Sigmoid colon (tissue), 7 donors: ENCODE measurements at regions of chr2 and their contacts with region 1.

Region 1: GRCh38 chr2:12931186-12931844 is 214.6 kb downstream of the TRIB2 start:
- DNase-seq: no peak
- H3K4me3 ChIP-seq: no peak overlapping the region
- H3K27ac ChIP-seq: peak overlapping the region in 1 of 4 donors; percentile 57
- H3K4me1 ChIP-seq: peaks cover 0 to 34% (median 27%) of the 10 kb centered on the region in 4 donors
- H3K27me3 ChIP-seq: no peaks in the 10 kb centered on the region
- CTCF ChIP-seq: peak; percentile 76 to 87 (median 82)
- EP300 ChIP-seq: no peak
- POLR2A ChIP-seq: no peak

Region 2: DNA sequence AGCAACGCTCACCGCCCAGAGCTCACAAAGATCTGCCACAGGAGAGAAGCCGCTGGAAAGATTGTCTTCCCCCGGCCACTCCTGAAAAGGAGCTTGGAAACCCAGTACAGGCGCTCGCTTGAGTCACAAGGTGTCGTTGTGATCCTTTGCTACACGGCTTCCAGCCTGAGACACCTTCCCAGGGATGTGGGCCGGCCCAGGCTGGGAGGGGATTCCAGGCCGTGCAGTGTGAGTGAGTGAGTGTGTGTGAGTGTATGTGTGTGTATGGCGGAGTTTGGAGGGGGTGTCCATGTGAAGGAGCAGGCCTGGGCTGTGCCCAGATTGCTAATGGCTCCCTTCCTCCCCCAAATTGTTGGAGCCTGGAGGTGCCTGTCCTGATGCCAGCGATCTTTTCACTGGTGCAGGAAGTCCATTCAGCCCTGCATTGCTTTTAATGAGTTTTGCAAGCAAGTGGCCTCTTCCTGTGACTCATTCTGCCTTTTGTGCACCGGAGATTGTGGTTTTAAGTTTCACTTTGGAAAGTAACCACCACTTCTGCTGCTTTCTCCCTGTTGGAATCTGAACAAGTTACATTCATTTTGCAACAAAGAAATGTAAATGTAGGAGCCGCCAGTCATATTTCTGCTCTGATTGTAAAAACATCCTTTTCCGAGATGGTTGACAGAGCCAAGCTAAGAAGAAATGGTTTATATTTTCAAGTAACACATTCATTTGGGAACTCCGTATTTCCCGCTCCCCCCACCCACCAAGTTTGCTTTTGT is 1101.2 kb before region 1 on chr2:
- intact Hi-C with region 1: loop called (anchors 1 kb)
- DNase-seq: peak; percentile 84
- H3K4me3 ChIP-seq: peak overlapping the region; percentile 3 to 37 (median 27)
- H3K27ac ChIP-seq: peak overlapping the region; percentile 75 to 84 (median 80)
- H3K4me1 ChIP-seq: peaks cover 0 to 24% (median 22%) of the 10 kb centered on the region in 4 donors
- H3K27me3 ChIP-seq: no peaks in the 10 kb centered on the region
- CTCF ChIP-seq: peak in 2 of 4 experiments; percentile 5 to 27
- EP300 ChIP-seq: no peak
- POLR2A ChIP-seq: no peak

Region 3: GRCh38 chr2:11863513-11864328 is 1067.6 kb before region 1 on chr2:
- intact Hi-C with region 1: loop called (anchors 2 kb)
- DNase-seq: peak; percentile 93
- H3K4me3 ChIP-seq: peak overlapping the region in 1 of 4 donors; percentile 15
- H3K27ac ChIP-seq: peak overlapping the region; percentile 7 to 55 (median 42)
- H3K4me1 ChIP-seq: peaks cover 0 to 15% (median 13%) of the 10 kb centered on the region in 4 donors
- H3K27me3 ChIP-seq: no peaks in the 10 kb centered on the region
- CTCF ChIP-seq: peak; percentile 92 to 97 (median 97)
- EP300 ChIP-seq: peak in 1 of 4 donors; percentile 8
- POLR2A ChIP-seq: no peak

Region 4: DNA sequence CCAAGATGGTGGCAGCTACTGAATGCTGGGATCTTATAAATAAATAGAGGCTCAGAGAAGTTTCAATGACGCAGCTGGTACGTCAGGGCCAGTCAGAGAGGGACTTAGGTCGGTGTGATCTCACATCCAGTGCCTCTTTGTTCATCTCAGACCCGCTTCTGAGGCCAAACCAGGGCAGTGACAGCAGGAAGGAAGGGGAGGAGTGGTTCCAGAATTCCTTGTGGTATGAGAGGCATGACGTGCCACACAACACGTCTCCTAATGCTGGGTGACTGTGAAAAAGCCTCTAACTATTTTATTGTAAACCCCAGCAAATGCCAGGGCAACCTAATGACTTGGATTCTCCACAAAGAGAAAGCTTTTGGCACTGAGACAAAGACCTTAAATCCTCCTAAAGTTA is 761.6 kb before region 1 on chr2:
- intact Hi-C with region 1: loop called (anchors 10 kb)
- DNase-seq: peak; percentile 74
- H3K4me3 ChIP-seq: no peak overlapping the region
- H3K27ac ChIP-seq: peak overlapping the region; percentile 51 to 73 (median 66)
- H3K4me1 ChIP-seq: peaks cover 0 to 29% (median 25%) of the 10 kb centered on the region in 4 donors
- H3K27me3 ChIP-seq: no peaks in the 10 kb centered on the region
- CTCF ChIP-seq: no peak
- EP300 ChIP-seq: peak in 2 of 4 donors; percentile 40 to 47
- POLR2A ChIP-seq: no peak

Region 5: DNA sequence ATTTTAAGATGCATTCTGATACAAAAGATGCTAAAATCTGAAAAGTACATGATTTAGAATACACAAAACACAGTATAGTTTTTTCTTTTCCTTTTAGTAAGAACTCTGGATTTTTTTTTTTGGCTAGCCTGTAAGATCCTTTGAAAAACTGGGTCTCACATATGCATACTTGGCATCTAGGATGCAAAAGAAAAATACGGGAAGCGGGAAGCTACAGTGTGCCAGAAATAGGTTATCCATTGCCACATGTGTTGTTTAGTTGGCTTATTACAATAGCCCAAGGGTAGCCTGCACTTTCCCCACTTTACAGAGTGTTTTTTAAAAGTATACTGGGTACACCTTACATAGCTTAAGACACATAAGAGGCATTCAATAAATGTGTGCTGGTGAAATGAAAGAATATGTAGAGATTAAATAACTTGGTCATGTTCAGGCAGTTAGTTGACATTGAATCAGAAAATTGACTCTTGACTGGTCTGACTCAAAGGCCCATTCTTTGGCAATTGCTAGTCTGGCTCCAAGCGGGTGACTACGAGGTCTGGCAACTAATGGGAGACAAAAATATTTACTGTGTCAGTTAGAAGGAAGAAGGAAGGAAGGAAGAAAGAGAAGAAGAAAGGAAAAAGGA is 501.4 kb before region 1 on chr2:
- intact Hi-C with region 1: loop called (anchors 10 kb)
- DNase-seq: no peak
- H3K4me3 ChIP-seq: no peak overlapping the region
- H3K27ac ChIP-seq: peak overlapping the region in 3 of 4 donors; percentile 63 to 77 (median 76)
- H3K4me1 ChIP-seq: peaks cover 3 to 49% (median 36%) of the 10 kb centered on the region in 4 donors
- H3K27me3 ChIP-seq: no peaks in the 10 kb centered on the region
- CTCF ChIP-seq: no peak
- EP300 ChIP-seq: no peak
- POLR2A ChIP-seq: no peak

Region 6: GRCh38 chr2:13006829-13007717 is 75.8 kb after region 1 on chr2:
- intact Hi-C with region 1: loop called (anchors 5 kb)
- DNase-seq: peak; percentile 80
- H3K4me3 ChIP-seq: peak overlapping the region in 1 of 4 donors; percentile 2
- H3K27ac ChIP-seq: peak overlapping the region in 3 of 4 donors; percentile 42 to 53 (median 44)
- H3K4me1 ChIP-seq: peaks cover 0 to 20% (median 18%) of the 10 kb centered on the region in 4 donors
- H3K27me3 ChIP-seq: no peaks in the 10 kb centered on the region
- CTCF ChIP-seq: peak; percentile 57 to 90 (median 81)
- EP300 ChIP-seq: no peak
- POLR2A ChIP-seq: no peak

Region 7: GRCh38 chr2:13046557-13047165 is 115.3 kb after region 1 on chr2:
- intact Hi-C with region 1: no loop called
- DNase-seq: no peak
- H3K4me3 ChIP-seq: no peak overlapping the region
- H3K27ac ChIP-seq: no peak overlapping the region
- H3K4me1 ChIP-seq: no peaks in the 10 kb centered on the region
- H3K27me3 ChIP-seq: no peaks in the 10 kb centered on the region
- CTCF ChIP-seq: no peak
- EP300 ChIP-seq: no peak
- POLR2A ChIP-seq: no peak